Activated naive CD4-positive, alpha-beta T cell treated with anti-CD3 and anti-CD28 coated beads for 36 hours (primary cell): ENCODE measurements at regions of chr3 and their contacts with region 1.

Region 1: GRCh38 chr3:183210839-183211341 is 42.2 kb upstream of the B3GNT5 start:
- DNase-seq: peak; percentile 73
- H3K4me3 Mint-ChIP-seq: no peak overlapping the region
- H3K27ac Mint-ChIP-seq: peak overlapping the region; percentile 85
- H3K4me1 Mint-ChIP-seq: peaks cover 63% of the 10 kb centered on the region
- H3K27me3 Mint-ChIP-seq: no peaks in the 10 kb centered on the region

Region 2: GRCh38 chr3:183099026-183099837 is 111.7 kb before region 1 on chr3 and contains the start of gene MCCC1:
- CTCF ChIA-PET with region 1: no interaction called
- intact Hi-C with region 1: loop called (anchors 1 kb)
- DNase-seq: peak; percentile 99
- H3K4me3 Mint-ChIP-seq: peak within 1 kb of the TSS; percentile 97
- H3K27ac Mint-ChIP-seq: peak within 1 kb of the TSS; percentile 91
- H3K4me1 Mint-ChIP-seq: peaks cover 33% of the 10 kb centered on the region
- H3K27me3 Mint-ChIP-seq: no peaks in the 10 kb centered on the region
- total RNA-seq, gene MCCC1: 21.0 to 24.9 TPM

Region 3: DNA sequence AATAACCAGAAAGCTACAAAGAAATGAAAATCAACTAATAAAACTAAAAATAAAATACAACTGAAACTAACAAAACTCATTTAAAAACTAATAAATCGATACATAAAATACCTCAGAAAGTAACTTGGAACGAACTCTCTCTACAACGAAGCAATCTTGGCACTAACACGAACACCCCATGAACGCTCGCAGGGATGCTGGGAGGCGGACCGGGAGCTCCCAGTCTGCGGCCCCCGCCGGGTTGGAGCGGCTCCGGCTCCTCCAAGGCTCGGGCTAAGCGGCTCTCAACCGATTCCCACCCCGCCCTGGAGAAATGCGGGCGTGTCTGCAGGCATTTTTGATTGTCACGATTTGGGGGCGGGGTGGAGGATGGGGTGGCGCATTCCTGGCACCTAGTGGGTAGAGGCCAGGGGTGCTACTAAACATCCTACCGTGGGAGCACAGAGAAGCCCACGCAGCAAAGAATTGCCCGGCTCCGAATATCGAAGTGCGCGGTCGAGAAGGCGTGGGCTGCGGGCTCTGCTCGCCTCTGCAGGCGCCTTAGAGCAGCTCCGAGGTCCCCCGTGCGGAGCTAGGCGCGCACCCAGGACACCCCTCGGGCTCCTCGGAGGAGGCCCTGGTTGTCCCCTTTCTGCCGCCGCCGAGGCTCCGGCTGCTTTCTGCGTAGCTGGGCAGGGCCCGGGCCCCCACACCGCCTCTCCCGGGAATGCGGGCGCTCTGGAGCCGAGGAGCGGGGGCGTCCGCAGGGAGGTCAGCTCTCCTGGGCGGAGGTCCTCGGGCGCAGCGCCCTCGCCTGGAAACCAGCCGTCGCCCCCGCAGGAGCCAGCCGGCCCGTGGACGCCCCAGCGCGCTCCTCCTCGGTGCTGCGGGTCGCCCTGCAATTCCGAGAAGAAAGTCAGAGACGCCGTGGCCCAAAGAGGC is 32.0 kb before region 1 on chr3:
- CTCF ChIA-PET with region 1: interaction called, 12 read pairs
- intact Hi-C with region 1: no loop called
- DNase-seq: peak; percentile 84
- H3K4me3 Mint-ChIP-seq: peak overlapping the region; percentile 76
- H3K27ac Mint-ChIP-seq: no peak overlapping the region
- H3K4me1 Mint-ChIP-seq: peaks cover 11% of the 10 kb centered on the region
- H3K27me3 Mint-ChIP-seq: peaks cover 30% of the 10 kb centered on the region

Region 4: DNA sequence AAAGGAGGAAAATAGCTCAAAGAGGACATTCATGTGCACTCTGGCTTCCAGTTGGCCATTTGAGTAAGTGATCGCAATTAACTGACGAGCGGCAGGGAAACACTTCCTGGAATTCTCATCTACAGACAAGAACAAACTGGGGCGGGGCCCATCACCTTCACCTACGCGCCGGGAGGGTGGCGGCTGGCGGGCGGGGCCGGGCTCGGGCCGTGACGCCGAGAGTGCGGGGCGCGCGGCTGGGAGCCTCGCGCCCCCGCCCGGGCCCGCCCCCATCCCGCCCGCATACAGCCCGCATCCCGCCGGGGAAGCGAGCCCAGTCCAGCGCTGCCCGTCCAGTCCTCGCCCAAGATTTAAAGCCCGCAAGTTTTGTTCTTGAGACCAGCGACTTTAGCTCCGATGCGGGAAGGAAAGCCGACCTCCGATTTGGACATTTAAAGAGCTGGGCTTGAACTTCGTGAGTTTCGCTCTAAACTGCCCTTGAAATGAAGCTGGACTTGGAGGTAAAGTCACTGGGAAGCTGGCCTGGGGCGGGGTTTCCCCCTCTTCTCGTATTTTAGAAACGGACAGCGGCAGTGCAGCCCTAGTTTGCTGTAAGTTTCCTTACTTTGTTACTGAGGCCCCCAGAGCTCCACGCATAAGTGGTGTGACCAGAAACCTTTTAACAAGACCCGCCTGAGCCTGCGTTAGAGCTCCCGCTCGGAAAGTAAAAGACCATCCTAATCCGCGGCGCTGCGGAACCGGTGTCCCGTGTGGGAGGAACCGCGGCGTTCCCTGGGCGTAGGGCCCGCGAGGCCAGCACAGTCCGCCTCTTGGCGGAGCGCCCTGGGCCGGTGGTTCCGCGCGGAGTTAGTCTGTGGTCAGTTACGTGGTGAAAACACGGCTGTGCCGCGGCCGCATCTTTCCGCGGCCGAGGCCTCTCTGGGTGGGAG is 42.3 kb after region 1 on chr3 and contains the start of gene B3GNT5:
- CTCF ChIA-PET with region 1: interaction called, 4 read pairs
- intact Hi-C with region 1: loop called (anchors 1 kb)
- DNase-seq: peak; percentile 67
- H3K4me3 Mint-ChIP-seq: peak within 1 kb of the TSS; percentile 76
- H3K27ac Mint-ChIP-seq: peak within 1 kb of the TSS; percentile 75
- H3K4me1 Mint-ChIP-seq: peaks cover 29% of the 10 kb centered on the region
- H3K27me3 Mint-ChIP-seq: peaks cover 2% of the 10 kb centered on the region
- total RNA-seq, gene B3GNT5: 15.0 to 18.8 TPM

Region 5: GRCh38 chr3:183275418-183275817 is 64.5 kb after region 1 on chr3:
- CTCF ChIA-PET with region 1: no interaction called
- intact Hi-C with region 1: no loop called
- DNase-seq: no peak
- H3K4me3 Mint-ChIP-seq: no peak overlapping the region
- H3K27ac Mint-ChIP-seq: no peak overlapping the region
- H3K4me1 Mint-ChIP-seq: peaks cover 26% of the 10 kb centered on the region
- H3K27me3 Mint-ChIP-seq: no peaks in the 10 kb centered on the region

Region 6: GRCh38 chr3:183328823-183329222 is 117.9 kb after region 1 on chr3:
- CTCF ChIA-PET with region 1: no interaction called
- intact Hi-C with region 1: loop called (anchors 2 kb)
- DNase-seq: no peak
- H3K4me3 Mint-ChIP-seq: no peak overlapping the region
- H3K27ac Mint-ChIP-seq: no peak overlapping the region
- H3K4me1 Mint-ChIP-seq: peaks cover 24% of the 10 kb centered on the region
- H3K27me3 Mint-ChIP-seq: no peaks in the 10 kb centered on the region